ENCODE measurements at regions of chr9 and their contacts with region 1.

Region 1: DNA sequence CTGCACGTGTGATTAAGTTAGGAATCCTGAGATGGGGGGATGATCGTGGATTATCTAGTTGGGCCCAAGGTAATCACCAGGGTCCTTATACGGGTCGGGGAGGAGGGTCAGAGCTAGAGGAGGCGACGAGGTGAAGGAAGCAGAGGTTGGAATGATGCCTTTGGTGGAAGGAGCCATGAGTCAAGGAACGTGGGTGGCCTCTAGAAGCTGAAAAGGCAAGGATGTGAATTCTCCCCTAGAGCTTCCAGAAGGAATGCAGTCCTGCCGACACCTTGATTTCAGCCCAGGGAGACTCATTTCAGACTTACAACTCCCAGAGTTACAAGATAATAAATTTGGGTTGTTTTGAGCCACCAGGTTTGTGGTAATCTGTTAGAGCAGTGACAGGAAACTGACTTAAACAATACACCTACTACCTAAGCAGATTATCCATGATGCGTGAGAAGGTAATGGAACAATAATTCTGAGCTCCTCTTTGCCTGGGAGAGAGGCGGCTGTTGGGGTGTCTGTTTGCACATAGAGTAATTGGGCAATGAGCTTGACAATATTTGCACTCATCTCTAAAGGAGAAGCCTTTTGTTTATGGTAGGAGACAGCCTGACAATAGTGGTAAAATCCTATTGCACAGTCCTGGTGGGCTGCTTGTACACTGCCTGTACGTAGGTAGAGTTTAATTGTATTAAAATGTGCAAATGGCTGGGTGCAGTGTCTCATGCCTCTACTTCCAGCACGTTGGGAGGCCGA is 129.3 kb upstream of the IER5L start:
- DNase-seq: no peak
- H3K4me3 ChIP-seq: no peak overlapping the region
- H3K27ac ChIP-seq: no peak overlapping the region
- H3K4me1 ChIP-seq: no peaks in the 10 kb centered on the region
- H3K27me3 ChIP-seq: no peaks in the 10 kb centered on the region
- CTCF ChIP-seq: no peak
- POLR2A ChIP-seq: no peak

Region 2: DNA sequence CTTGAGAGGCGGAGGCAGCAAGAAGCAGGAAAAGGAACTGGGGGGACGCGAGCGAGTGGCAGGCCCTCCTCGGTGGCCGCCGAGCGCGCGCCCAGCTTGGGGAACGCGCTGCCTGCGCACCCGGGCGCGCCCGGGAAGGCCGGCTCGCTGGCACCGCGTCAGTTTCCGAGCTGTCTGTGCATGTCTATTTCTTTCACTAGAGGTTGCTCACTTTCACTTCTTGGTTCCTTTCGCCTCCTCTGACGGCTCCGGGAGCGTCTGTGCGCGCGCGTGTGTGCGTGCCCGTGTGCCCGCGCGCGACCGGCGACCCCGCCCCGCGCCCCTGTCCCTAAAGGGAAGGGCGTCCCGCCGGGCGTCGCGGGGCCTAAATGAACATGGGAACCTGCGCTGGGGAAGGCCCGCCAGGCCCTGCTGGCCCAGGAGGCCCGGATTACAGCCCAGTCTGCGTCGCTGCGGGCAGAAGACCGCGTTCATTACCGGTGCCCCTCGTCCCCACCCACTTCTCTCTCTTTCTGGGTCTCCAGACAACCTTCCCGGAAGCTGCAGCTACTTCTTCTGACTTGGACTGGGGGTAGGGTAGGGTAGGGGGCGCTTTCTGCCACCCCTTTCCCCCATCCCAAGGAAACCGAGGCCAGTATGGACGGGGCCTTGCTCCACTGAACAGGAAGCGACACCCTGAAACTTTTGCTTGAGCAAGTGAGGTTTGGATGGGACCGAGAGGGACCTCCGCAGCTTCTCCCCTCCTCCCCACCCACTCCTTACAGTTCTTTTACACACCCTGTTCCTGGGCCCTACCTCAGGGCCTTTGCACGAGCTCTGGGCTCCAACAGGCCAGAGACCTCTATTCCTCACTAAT is 76.4 kb after region 1 on chr9:
- intact Hi-C with region 1: loop called (anchors 5 kb)
- DNase-seq: peak; percentile 88
- H3K4me3 ChIP-seq: peak overlapping the region; percentile 41 to 45
- H3K27ac ChIP-seq: peak overlapping the region; percentile 97 to 99
- H3K4me1 ChIP-seq: peaks cover 7% of the 10 kb centered on the region
- H3K27me3 ChIP-seq: no peaks in the 10 kb centered on the region
- CTCF ChIP-seq: peak in 3 of 4 experiments; percentile 26 to 51 (median 37)
- POLR2A ChIP-seq: peak; percentile 52